Stomach (tissue), 19 donors: ENCODE measurements at regions of chr3 and their contacts with region 1.

Region 1: DNA sequence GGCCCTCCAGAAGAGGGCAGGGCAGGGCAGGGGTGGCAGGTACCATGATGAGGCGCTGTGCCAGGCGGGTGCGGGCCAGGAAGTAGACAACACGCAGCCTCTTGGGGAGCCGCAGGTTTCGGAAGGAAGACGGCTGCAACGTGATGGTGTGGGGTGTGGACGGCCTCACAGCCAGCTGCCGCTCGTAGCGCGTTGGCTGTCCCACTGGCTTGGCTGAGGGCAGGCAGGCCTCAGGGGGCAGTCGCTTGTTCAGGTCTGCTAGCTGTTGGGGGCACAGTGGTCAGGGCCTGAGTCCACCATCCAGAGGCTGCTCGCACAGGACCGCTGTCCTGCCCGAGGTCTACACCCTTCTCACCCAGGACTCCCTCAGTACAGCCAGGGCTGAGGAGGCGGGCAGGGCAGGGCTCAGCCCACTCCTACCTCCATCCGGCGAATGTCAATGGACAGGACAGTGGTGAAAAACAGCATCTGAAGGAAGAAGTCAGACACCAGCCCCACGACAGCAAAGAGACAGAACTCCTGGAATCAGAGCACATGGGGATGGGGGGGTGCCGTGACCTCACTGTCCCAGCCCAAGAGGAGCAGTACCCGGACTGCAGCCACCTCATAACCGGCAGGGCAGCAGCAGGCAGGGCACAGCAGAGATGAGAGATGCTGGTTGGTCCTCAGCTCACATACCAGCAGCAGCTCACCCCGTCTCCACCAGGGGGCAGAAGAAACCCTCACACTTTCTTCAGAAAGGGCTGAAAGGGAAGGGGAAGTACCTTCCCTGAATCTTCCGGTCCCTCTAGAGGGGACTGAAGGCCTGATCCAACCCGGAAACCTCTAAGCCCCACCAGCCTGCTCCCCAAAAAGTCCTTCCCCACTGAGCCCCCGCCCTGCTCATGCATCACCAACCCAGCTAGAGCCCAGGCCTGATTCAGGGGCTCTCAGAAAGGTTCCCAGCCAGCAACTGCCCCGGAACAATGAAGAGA is 40.0 kb downstream of the PTPN23 start:
- DNase-seq: peak; percentile 91 to 95
- H3K4me3 ChIP-seq: no peak overlapping the region
- H3K27ac ChIP-seq: peak overlapping the region; percentile 60 to 78 (median 74)
- H3K4me1 ChIP-seq: peaks cover 12 to 42% (median 31%) of the 10 kb centered on the region in 4 donors
- H3K27me3 ChIP-seq: no peaks in the 10 kb centered on the region
- CTCF ChIP-seq: peak in 5 of 7 experiments; percentile 87 to 95 (median 93)
- EP300 ChIP-seq: no peak
- POLR2A ChIP-seq: no peak

Region 2: GRCh38 chr3:47475570-47476329 is 55.0 kb after region 1 on chr3 and contains the start of gene SCAP:
- intact Hi-C with region 1: loop called (anchors 5 kb)
- DNase-seq: peak; percentile 96 to 97
- H3K4me3 ChIP-seq: peak within 1 kb of the TSS; percentile 91 to 99 (median 94)
- H3K27ac ChIP-seq: peak within 1 kb of the TSS; percentile 81 to 90 (median 87)
- H3K4me1 ChIP-seq: peaks cover 18 to 35% (median 31%) of the 10 kb centered on the region in 4 donors
- H3K27me3 ChIP-seq: no peaks in the 10 kb centered on the region
- CTCF ChIP-seq: peak in 6 of 7 experiments; percentile 75 to 99 (median 98)
- EP300 ChIP-seq: no peak
- POLR2A ChIP-seq: no peak
- total RNA-seq, gene SCAP: 44.9 to 223 (median 56.2) TPM